ENCODE measurements at regions of chr5 and their contacts with region 1.

Region 1: GRCh38 chr5:150560401-150561193 is 52.7 kb downstream of the NDST1 start:
- DNase-seq: no peak
- H3K4me3 ChIP-seq: no peak overlapping the region
- H3K27ac ChIP-seq: peak overlapping the region in 2 of 8 donors; percentile 11 to 32
- H3K4me1 ChIP-seq: peaks cover 0 to 23% (median 10%) of the 10 kb centered on the region in 6 donors
- H3K27me3 ChIP-seq: no peaks in the 10 kb centered on the region
- CTCF ChIP-seq: peak; percentile 77 to 96 (median 92)
- POLR2A ChIP-seq: no peak

Region 2: DNA sequence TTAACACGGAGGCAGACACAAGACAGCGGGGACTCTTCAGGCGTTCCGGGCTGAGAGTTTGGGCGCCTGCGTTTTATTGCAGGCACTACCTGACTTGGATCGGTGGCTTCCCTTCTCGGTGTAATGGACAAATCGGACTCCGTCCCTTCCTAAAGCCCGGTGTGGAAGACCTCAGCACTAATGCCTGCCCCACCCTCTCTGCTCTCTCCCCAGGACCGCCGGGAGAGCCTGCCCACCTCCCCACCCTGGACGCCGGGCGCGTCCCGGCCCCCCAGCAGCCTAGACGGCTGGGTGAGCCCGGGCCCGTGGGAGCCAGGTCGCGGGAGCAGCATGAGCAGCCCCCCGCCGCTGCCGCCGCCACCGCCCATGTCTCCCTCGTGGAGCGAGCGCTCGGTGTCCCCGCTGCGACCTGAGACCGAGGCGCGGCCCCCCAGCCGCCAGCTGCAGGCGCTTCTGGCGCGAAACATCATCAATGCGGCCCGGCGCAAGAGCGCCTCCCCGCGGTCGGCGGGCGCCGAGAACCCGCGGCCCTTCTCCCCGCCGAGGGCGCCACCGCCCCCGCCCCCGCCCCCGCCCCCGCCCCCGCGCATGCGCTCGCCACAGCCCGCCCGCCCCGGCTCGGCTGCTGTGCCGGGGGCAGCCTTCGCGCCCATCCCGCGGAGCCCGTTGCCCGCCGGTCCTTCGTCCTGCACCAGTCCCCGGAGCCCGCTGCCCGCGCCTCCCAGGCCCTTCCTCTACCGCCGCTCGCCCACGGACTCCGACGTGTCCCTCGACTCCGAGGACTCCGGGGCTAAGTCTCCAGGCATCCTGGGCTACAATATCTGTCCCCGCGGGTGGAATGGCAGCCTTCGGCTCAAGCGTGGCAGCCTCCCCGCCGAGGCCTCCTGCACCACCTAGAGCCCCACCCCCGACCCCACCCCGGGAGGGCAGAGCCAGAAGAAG is 95.9 kb after region 1 on chr5:
- intact Hi-C with region 1: loop called (anchors 5 kb)
- DNase-seq: peak; percentile 93
- H3K4me3 ChIP-seq: peak overlapping the region; percentile 22 to 77 (median 48)
- H3K27ac ChIP-seq: peak overlapping the region; percentile 41 to 75 (median 54)
- H3K4me1 ChIP-seq: peaks cover 4 to 52% (median 30%) of the 10 kb centered on the region in 6 donors
- H3K27me3 ChIP-seq: peaks cover 0 to 5% (median 0%) of the 10 kb centered on the region in 7 donors
- CTCF ChIP-seq: peak in 10 of 11 experiments; percentile 28 to 88 (median 74)
- POLR2A ChIP-seq: no peak

Region 3: DNA sequence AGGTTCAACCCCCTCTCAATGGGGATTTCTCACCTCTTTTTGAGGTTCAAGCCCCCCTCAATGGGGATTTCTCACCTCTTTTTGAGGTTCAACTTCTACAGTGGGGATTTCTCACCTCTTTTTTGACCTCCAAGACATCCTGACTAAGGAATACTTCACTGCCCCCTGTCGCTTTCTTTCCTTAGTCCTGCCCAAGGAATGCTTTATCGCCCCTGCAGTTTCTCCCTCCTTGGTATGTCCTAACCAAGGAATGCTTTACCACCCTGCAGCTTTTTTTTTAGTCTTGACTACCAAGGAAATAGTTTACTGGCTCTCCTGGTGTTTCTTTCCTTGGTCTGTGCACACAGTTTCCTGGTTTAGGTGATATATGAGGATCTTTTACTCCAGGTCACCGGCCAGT is 276.1 kb after region 1 on chr5:
- intact Hi-C with region 1: no loop called
- DNase-seq: no peak
- H3K4me3 ChIP-seq: no peak overlapping the region
- H3K27ac ChIP-seq: no peak overlapping the region
- H3K4me1 ChIP-seq: no peaks in the 10 kb centered on the region
- H3K27me3 ChIP-seq: no peaks in the 10 kb centered on the region
- CTCF ChIP-seq: no peak
- POLR2A ChIP-seq: no peak

Region 4: GRCh38 chr5:151298063-151298855 is 737.7 kb after region 1 on chr5:
- intact Hi-C with region 1: no loop called
- DNase-seq: no peak
- H3K4me3 ChIP-seq: no peak overlapping the region
- H3K27ac ChIP-seq: no peak overlapping the region
- H3K4me1 ChIP-seq: no peaks in the 10 kb centered on the region
- H3K27me3 ChIP-seq: no peaks in the 10 kb centered on the region
- CTCF ChIP-seq: peak in 8 of 11 experiments; percentile 11 to 65 (median 52)
- POLR2A ChIP-seq: no peak

Measured in spleen (tissue), 13 donors.